Mammary epithelial cell (primary cell): ENCODE measurements at regions of chr2 and their contacts with region 1.

Region 1: GRCh38 chr2:1662351-1663180 is 81.7 kb downstream of the PXDN start:
- DNase-seq: no peak
- H3K4me3 ChIP-seq: no peak overlapping the region
- H3K27ac ChIP-seq: no peak overlapping the region
- H3K4me1 ChIP-seq: no peaks in the 10 kb centered on the region
- H3K27me3 ChIP-seq: no peaks in the 10 kb centered on the region
- CTCF ChIP-seq: no peak

Region 2: DNA sequence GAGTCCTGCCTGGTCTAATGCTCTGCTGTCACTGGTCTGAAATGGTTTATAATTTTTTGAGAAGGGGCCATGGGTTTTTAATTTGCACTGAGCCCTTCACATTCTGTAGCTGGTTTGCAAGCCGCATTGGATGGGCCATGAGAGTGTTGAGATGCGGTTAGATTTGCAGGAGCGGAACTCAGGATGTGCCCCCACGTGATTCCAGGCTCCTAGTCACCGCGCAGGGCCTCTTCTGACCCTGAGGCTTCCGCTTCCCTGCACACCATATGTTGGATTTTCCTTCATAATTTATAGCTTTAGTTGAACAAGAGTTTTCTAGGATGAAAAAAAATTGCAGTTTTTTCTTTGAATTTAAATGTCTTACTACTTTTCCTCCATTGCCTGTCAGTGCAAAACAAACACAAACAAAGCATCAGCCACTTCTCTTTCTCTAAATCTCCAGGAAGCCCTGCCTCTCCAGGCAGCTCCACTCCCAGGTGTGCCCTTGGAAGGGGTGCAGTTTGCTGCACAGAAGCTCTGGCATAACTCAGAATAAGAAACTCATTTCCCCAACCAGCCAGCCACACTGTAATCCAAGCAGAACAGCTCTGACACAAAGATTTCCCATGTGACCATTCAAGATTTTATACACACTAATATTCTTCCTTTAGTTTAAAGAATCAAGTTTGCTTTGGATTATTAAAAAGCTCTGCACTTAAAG is 267.7 kb before region 1 on chr2:
- CTCF ChIA-PET with region 1: no interaction called
- dilution Hi-C with region 1: no loop called
- in situ Hi-C with region 1: no loop called
- intact Hi-C with region 1: no loop called
- DNase-seq: no peak
- H3K4me3 ChIP-seq: no peak overlapping the region
- H3K27ac ChIP-seq: no peak overlapping the region
- H3K4me1 ChIP-seq: no peaks in the 10 kb centered on the region
- H3K27me3 ChIP-seq: no peaks in the 10 kb centered on the region
- CTCF ChIP-seq: no peak

Region 3: GRCh38 chr2:1736997-1737480 is 74.5 kb after region 1 on chr2:
- CTCF ChIA-PET with region 1: no interaction called
- dilution Hi-C with region 1: loop called (anchors 5 kb)
- in situ Hi-C with region 1: no loop called
- intact Hi-C with region 1: no loop called
- DNase-seq: no peak
- H3K4me3 ChIP-seq: no peak overlapping the region
- H3K27ac ChIP-seq: no peak overlapping the region
- H3K4me1 ChIP-seq: peaks cover 2% of the 10 kb centered on the region
- H3K27me3 ChIP-seq: no peaks in the 10 kb centered on the region
- CTCF ChIP-seq: no peak